K562 (cell line): ENCODE measurements at regions of chr18 and their contacts with region 1.

Region 1: DNA sequence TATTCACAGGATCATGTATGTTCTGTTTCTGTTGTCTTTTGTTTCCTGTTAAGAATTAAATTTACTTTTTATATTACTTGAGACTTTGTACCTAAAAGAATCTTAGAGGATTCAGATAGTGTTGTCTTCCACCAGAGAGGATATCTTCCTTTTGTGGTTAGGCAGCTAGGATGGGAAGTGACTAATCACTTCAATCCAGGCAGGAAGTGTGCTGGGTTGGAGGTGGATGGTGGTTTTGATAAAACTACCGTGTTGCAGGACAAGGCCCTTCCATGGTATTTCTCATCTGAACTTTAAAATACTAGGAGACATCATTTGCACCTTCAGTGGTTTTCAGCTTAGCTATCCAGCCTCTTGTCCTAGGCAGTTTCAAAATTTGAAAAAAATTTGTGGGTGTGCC is 728.6 kb upstream of the CDH2 start:
- DNase-seq: no peak
- ATAC-seq: no peak
- H3K4me3 ChIP-seq: no peak overlapping the region
- H3K27ac ChIP-seq: no peak overlapping the region
- H3K4me1 ChIP-seq: no peaks in the 10 kb centered on the region
- H3K27me3 ChIP-seq: no peaks in the 10 kb centered on the region
- CTCF ChIP-seq: no peak
- EP300 ChIP-seq: no peak
- POLR2A ChIP-seq: no peak
- RAD21 ChIP-seq: no peak

Region 2: GRCh38 chr18:28846958-28847357 is 58.6 kb before region 1 on chr18:
- CTCF ChIA-PET with region 1: no interaction called
- POLR2A ChIA-PET with region 1: no interaction called
- in situ Hi-C with region 1: no loop called
- intact Hi-C with region 1: loop called (anchors 10 kb)
- DNase-seq: no peak
- ATAC-seq: no peak
- H3K4me3 ChIP-seq: no peak overlapping the region
- H3K27ac ChIP-seq: no peak overlapping the region
- H3K4me1 ChIP-seq: no peaks in the 10 kb centered on the region
- H3K27me3 ChIP-seq: no peaks in the 10 kb centered on the region
- CTCF ChIP-seq: no peak
- EP300 ChIP-seq: no peak
- POLR2A ChIP-seq: no peak
- RAD21 ChIP-seq: no peak